GM13977 (cell line): ENCODE measurements at regions of chr19 and their contacts with region 1.

Region 1: GRCh38 chr19:43826787-43827754 is at the start of gene ZNF283:
- DNase-seq: peak; percentile 86
- CTCF ChIP-seq: no peak

Region 2: DNA sequence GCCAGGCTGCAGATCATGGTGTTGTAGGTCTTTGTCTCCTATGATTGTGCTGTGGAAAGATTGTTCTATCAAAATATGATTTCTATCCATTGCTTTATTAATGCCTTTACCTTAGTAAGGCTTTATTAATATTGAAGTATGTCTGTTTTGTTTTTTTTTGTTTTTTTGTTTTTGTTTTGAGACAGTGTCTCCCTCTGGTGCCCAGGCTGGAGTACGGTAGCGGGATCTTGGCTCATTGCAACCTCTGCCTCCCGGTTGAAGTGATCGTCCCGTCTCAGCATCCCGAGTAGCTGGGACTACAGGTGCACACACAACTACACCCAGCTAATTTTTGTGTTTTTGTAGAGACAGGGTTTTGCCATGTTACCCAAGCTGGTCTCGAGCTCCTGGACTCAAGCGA is 103.5 kb before region 1 on chr19:
- in situ Hi-C with region 1: no loop called
- DNase-seq: no peak
- CTCF ChIP-seq: no peak

Region 3: DNA sequence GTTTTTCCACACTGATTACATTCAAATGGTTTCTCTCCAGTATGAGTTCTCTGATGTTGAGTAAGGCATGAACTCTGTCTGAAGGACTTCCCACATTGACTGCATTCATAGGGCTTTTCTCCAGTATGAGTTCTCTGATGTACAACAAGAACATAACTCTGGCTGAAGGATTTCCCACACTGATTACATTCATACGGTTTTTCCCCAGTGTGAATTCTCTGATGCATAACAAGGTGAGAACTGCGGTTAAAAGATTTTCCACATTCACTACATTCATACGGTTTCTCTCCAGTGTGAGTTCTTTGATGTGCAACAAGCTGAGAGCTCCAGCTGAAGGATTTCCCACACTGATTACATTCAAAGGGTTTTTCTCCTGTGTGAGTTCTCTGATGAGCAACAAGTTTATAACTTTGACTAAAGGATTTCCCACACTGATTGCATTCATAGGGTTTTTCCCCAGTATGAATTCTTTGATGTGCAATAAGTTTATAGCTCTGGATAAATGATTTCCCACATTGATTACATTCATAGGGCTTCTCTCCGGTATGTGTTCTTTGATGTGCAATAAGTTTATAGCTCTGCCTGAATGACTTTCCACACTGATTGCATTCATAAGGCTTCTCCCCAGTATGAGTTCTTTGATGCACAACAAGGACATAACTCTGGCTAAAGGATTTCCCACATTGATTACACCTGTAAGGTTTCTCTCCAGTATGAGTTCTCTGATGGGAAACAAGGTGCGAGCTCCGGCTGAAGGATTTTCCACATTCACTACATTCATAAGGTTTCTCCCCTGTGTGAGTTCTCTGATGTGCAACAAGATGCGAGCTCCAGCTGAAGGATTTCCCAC is 649.7 kb after region 1 on chr19:
- in situ Hi-C with region 1: loop called (anchors 25 kb)
- DNase-seq: no peak
- CTCF ChIP-seq: no peak

Region 4: DNA sequence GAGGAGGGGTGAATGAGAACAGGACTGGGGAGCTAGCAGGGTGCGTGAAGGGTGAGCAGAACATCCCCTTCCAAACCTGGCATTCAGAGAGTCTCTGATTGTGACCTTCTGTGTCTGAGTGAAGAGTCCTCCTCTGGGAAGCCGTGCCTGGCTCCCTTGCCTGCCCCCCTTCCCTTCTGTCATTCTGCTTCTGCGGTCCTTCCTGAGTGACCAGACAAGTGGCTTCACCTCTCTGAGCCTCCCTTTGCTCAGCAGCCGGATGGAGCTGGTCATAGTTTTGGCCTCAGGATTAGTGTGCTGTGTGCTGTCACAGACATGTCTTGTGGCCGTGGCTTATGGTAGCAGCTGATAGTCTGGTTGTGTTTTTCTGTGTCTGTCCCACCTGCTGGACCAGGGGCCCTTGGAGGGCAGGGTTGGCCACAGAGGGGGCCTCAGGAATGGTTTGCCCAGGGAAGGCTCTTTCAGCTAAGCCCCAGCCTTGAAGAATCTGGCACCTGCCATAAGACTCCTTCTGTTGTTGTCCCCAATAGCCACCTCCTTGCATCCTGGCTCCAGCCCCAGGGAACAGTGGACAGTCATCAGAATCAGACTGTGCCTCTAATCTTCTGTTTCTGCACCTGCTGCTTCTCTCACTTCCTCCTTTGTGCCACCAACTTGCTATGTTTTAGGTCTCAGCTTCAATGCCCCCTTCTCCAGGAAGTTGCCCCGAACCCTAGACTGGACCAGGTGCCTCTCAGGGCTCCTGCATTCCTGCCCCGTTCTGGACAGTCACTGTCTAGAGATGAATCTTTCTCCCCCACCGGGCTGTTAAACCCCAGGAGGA is 1134.0 kb after region 1 on chr19:
- in situ Hi-C with region 1: no loop called
- DNase-seq: no peak
- CTCF ChIP-seq: no peak